ENCODE measurements at regions of chrX and their contacts with region 1.

Region 1: DNA sequence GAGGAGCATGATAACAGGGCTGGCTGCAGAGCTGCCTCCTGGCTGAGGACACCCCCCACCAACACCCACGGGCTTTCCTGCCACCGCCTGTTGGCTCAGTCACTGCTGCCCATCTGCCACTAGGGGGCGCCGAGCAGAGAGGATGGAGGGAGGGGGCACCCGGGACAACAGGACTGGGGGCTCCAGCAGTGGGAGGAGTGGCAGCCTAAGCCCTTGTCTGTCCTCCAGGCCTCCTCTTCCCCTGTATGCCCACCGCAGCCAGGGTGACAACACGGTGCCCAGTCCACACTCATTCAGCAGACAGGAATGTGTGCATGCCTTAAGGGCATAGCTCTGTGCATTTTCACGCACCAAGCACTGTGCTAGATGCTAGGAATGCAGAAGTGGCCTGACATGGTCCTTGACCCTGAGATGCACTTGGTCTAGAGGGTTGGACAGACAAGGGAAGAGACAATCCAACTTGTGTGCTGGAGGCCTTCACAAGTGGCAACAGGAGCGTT is 149.9 kb downstream of the AMMECR1 start:
- ATAC-seq: peak in 3 of 8 experiments; percentile 66 to 91 (median 83)
- H3K4me3 ChIP-seq: no peak overlapping the region
- H3K27ac ChIP-seq: no peak overlapping the region
- H3K4me1 ChIP-seq: no peaks in the 10 kb centered on the region

Region 2: DNA sequence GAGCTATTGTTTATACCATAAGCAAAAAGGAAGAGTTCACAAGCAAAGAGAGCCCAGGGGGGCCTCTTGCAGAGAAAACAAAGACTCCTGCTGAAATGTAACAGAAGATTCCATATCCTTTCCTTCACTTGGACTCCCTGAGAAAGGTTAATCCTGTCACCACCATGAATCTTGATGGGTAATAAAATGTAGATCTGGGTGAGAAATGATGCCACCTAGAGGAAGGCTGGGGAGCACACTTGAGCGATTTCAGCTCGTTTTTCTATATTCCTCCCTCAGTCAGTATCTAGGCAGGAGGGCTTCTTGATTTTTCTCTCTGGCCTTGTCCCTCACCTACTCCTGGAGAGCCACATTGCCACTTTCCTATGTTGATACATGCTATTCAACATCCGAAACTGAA is 532.8 kb before region 1 on chrX:
- in situ Hi-C with region 1: no loop called
- ATAC-seq: peak in 3 of 8 experiments; percentile 33 to 49 (median 41)
- H3K4me3 ChIP-seq: no peak overlapping the region
- H3K27ac ChIP-seq: no peak overlapping the region
- H3K4me1 ChIP-seq: no peaks in the 10 kb centered on the region

Region 3: GRCh38 chrX:110317820-110318658 is 150.0 kb after region 1 on chrX and contains the start of gene AMMECR1:
- in situ Hi-C with region 1: loop called in 1 of 9 experiments (anchors 25 kb)
- ATAC-seq: peak; percentile 85 to 94 (median 88)
- H3K4me3 ChIP-seq: peak within 1 kb of the TSS; percentile 61 to 75 (median 73)
- H3K27ac ChIP-seq: peak within 1 kb of the TSS; percentile 82
- H3K4me1 ChIP-seq: peaks cover 0 to 5% of the 10 kb centered on the region in 2 donors
- total RNA-seq, gene AMMECR1: 3.3 to 9.9 (median 5.9) TPM

Region 4: GRCh38 chrX:110338915-110339314 is 170.9 kb after region 1 on chrX:
- in situ Hi-C with region 1: no loop called
- ATAC-seq: no peak
- H3K4me3 ChIP-seq: no peak overlapping the region
- H3K27ac ChIP-seq: no peak overlapping the region
- H3K4me1 ChIP-seq: no peaks in the 10 kb centered on the region

Region 5: DNA sequence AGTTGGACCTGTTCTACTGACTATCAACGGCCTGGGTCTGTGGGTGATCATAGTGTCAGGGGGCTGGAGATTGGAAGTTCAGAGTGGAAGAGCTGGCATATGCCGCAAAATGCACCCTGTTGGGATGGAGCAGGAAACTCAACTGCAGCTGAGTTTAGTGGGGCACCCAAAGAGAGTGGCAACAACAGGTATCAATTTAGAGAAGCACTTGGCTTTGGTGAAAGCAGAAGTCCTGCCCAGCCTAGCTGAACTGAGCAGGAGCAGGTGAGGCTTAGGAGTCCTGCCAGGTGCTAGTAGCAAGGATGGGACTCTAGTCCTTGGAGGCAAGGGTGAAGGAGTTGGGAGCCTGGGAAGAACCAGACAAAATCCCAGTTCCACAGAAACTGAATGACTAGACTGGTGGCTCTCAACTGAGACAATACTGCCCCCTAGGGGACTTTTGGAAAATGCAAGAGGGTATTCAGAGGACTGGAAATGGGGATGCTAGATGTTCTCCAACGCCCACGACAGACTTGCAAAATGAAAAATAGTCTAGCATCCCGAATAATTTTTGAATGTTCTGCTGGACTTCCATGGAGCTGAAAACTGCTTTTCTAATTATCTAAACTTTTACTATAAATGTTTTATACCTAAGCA is 240.0 kb after region 1 on chrX:
- in situ Hi-C with region 1: loop called in 5 of 9 experiments (anchors 10 to 25 kb)
- ATAC-seq: peak in 5 of 8 experiments; percentile 64 to 74 (median 72)
- H3K4me3 ChIP-seq: no peak overlapping the region
- H3K27ac ChIP-seq: no peak overlapping the region
- H3K4me1 ChIP-seq: peaks cover 0 to 3% of the 10 kb centered on the region in 2 donors

Region 6: DNA sequence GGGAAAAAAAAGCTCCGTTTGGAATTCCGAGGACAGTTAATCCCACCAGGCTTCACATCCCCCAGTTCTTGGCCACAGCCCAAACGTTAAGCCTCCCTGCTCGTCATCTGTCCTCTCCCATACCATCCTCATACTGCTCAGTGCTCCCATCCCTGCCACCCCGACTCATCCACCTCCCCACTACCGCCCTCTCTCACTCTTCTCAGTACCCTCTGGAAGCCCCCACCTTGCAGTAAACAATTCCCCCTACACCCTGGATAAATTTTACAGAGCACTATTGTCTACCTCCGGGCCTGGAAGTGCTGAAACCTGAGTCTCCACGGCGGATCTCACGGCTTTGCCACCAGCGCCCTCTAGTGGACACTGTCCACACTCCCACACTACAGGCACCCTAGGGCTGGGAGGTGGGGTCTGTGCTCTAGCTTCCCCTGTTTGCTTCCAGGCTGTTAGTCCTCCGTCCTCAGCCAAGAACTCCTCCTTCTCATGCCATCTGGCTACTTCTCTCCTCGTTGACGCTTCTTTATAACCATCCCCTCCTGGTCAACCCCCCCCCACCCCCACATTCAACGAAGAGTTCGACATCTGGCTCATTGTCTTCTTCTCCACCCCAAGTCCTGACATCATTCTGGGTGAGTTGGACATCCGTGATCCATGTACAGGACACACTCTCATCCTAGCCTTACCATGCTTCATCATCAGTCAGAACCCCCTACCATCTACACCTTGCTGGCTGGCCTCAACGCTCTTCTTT is 245.1 kb after region 1 on chrX:
- in situ Hi-C with region 1: loop called in 5 of 9 experiments (anchors 10 to 25 kb)
- ATAC-seq: peak; percentile 96 to 100 (median 96)
- H3K4me3 ChIP-seq: no peak overlapping the region
- H3K27ac ChIP-seq: no peak overlapping the region
- H3K4me1 ChIP-seq: peaks cover 10 to 19% of the 10 kb centered on the region in 2 donors

Measured in motor neuron (in vitro differentiated cells).